Ascending aorta (tissue), 2 donors: ENCODE measurements at regions of chr19 and their contacts with region 1.

Region 1: GRCh38 chr19:1020868-1021425 is at the start of gene TMEM259:
- DNase-seq: peak; percentile 87 to 98
- H3K4me3 ChIP-seq: peak within 1 kb of the TSS; percentile 93 to 94
- H3K27ac ChIP-seq: peak within 1 kb of the TSS; percentile 93 to 95
- H3K4me1 ChIP-seq: peaks cover 39 to 50% of the 10 kb centered on the region in 2 donors
- H3K27me3 ChIP-seq: no peaks in the 10 kb centered on the region
- CTCF ChIP-seq: no peak
- total RNA-seq, gene TMEM259: 452 TPM

Region 2: DNA sequence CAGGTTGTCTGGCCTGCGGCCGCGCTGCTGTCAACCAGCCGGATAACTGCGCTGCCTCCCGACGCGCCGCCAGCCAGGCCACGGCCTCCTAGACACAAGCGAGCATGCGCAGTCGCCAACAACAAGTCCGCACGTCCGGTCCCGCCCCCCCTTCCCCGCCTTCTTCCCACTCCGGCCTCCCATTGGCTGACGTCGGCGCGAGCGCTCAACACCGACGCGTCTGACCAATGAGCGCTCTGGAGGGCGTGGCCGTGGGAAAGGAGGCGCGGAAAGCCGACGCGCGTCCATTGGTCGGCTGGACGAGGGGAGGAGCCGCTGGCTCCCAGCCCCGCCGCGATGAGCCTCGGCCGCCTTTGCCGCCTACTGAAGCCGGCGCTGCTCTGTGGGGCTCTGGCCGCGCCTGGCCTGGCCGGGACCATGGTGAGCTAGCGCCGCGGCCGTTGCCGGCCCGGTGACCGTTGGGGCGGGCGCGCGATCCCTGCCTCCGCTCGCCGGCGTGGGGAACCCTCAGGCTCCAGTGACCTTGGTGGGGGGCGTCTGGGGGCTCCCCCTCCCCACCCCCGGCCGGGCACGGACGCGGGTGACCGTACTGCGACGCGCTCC is 82.9 kb after region 1 on chr19 and contains the start of gene GPX4:
- intact Hi-C with region 1: loop called (anchors 1 kb)
- DNase-seq: peak; percentile 95 to 99
- H3K4me3 ChIP-seq: peak within 1 kb of the TSS; percentile 84 to 93
- H3K27ac ChIP-seq: peak within 1 kb of the TSS; percentile 99
- H3K4me1 ChIP-seq: peaks cover 30 to 43% of the 10 kb centered on the region in 2 donors
- H3K27me3 ChIP-seq: no peaks in the 10 kb centered on the region
- CTCF ChIP-seq: no peak
- total RNA-seq, gene GPX4: 348 TPM